ENCODE measurements at regions of chr11 and their contacts with region 1.

Region 1: DNA sequence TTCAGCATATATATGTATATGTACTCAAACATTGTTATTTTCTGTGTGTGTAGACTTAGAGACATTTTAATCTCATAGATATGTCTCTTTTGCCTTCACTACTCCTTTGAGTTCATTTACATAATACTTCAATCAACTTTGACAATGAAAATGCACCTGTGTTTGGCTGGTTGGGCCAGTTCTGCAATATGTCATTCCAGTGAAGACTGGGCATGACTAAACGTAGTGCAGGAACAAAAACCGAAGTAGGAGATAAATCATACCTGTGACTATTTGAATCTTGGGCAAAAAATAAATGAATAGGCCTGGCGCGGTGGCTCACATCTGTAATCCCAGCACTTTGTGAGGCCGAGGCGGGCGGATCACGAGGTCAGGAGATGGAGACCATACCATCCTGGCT is 640.0 kb upstream of the ANO3 start:
- DNase-seq: no peak
- H3K4me3 ChIP-seq: no peak overlapping the region
- H3K27ac ChIP-seq: no peak overlapping the region
- H3K4me1 ChIP-seq: no peaks in the 10 kb centered on the region
- H3K27me3 ChIP-seq: no peaks in the 10 kb centered on the region
- CTCF ChIP-seq: no peak

Region 2: DNA sequence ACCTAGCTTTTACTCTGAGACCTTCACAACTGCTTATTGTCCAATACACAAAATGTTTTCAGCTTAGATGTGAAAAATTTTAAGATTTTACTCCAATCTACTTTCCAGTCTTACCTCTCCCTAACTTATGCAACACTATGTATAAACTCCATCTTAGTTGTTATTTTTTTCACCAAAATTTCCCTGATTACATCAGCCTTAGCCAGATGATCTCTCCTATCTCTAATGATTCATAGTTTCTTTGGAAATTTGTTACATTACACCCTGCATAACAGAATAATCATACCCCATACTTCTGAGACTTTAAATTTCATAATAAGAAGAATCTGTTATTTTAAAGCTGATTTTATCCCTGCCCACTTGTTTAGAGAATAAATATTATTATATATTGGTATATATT is 19.0 kb after region 1 on chr11:
- intact Hi-C with region 1: no loop called
- DNase-seq: no peak
- H3K4me3 ChIP-seq: no peak overlapping the region
- H3K27ac ChIP-seq: no peak overlapping the region
- H3K4me1 ChIP-seq: no peaks in the 10 kb centered on the region
- H3K27me3 ChIP-seq: no peaks in the 10 kb centered on the region
- CTCF ChIP-seq: no peak

Region 3: DNA sequence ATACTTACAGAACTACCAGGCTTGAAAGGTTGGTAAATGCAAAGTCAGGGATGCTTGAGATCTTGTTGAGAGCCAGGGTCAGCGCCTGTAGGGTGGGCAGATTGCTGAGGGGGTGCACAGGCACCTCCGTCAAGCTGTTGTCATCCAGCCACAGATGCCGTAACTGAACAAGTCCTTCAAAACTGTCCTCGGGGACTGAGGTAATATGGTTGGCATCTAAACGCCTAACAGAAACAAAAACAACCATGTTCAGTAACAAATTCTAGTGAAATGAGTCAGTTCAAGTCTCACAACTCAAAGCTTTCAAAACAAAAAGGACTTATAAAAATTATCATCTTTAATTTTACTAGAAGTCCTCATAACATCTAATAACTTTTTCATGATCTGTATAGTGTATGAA is 1693.3 kb after region 1 on chr11:
- intact Hi-C with region 1: loop called (anchors 5 kb)
- DNase-seq: peak in 1 of 2 donors; percentile 24
- H3K4me3 ChIP-seq: peak overlapping the region; percentile 35 to 36
- H3K27ac ChIP-seq: peak overlapping the region; percentile 64 to 70
- H3K4me1 ChIP-seq: peaks cover 0 to 35% (median 8%) of the 10 kb centered on the region in 4 donors
- H3K27me3 ChIP-seq: no peaks in the 10 kb centered on the region
- CTCF ChIP-seq: no peak